ENCODE measurements at regions of chr5 and their contacts with region 1.

Region 1: DNA sequence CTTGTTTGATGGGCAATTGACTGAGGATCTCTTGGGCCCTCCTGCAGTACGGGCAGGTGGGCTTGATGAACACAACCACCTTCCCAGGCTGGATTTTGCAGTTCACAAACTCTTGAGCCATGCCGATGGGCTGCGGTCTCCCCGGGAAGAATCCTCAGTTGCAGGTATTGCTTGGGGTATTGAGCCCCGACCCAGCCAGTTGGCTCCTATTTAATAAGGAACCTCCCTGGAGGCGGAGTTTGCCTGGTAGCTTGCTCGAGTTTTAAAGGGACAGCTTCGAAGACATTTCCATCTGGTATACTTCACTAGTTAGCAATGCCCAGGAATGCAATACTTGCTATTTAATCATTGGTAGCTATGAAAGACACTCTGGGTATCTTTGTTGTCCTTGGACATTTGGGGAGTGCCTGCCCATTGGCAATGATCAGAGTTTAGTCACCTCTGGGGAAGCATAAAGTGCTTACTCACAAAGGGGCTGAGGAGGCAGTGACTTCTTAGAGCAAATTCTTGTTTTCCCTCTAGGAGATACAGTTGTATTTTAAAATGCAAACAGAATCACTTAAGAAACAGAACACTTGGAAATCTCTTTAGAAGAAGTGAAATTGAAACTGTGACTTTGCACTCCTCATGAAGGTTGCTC is at the start of gene GLRX:
- DNase-seq: peak; percentile 93
- H3K4me3 Mint-ChIP-seq: peak within 1 kb of the TSS; percentile 95
- H3K27ac Mint-ChIP-seq: peak within 1 kb of the TSS; percentile 92
- H3K4me1 Mint-ChIP-seq: peaks cover 42% of the 10 kb centered on the region
- H3K27me3 Mint-ChIP-seq: no peaks in the 10 kb centered on the region
- CTCF ChIP-seq: no peak
- total RNA-seq, gene GLRX: 41.4 and 59.2 TPM in 2 replicates

Region 2: GRCh38 chr5:95773335-95774059 is 49.2 kb before region 1 on chr5:
- CTCF ChIA-PET with region 1: interaction called, 5 read pairs
- POLR2A ChIA-PET with region 1: interaction called, 21 read pairs
- intact Hi-C with region 1: no loop called
- DNase-seq: peak; percentile 83
- H3K4me3 Mint-ChIP-seq: no peak overlapping the region
- H3K27ac Mint-ChIP-seq: no peak overlapping the region
- H3K4me1 Mint-ChIP-seq: peaks cover 13% of the 10 kb centered on the region
- H3K27me3 Mint-ChIP-seq: no peaks in the 10 kb centered on the region
- CTCF ChIP-seq: no peak

Region 3: GRCh38 chr5:95835682-95836385 is 13.2 kb after region 1 on chr5:
- CTCF ChIA-PET with region 1: interaction called, 15 read pairs
- POLR2A ChIA-PET with region 1: interaction called, 55 read pairs
- intact Hi-C with region 1: no loop called
- DNase-seq: no peak
- H3K4me3 Mint-ChIP-seq: no peak overlapping the region
- H3K27ac Mint-ChIP-seq: no peak overlapping the region
- H3K4me1 Mint-ChIP-seq: peaks cover 15% of the 10 kb centered on the region
- H3K27me3 Mint-ChIP-seq: no peaks in the 10 kb centered on the region
- CTCF ChIP-seq: no peak

Region 4: DNA sequence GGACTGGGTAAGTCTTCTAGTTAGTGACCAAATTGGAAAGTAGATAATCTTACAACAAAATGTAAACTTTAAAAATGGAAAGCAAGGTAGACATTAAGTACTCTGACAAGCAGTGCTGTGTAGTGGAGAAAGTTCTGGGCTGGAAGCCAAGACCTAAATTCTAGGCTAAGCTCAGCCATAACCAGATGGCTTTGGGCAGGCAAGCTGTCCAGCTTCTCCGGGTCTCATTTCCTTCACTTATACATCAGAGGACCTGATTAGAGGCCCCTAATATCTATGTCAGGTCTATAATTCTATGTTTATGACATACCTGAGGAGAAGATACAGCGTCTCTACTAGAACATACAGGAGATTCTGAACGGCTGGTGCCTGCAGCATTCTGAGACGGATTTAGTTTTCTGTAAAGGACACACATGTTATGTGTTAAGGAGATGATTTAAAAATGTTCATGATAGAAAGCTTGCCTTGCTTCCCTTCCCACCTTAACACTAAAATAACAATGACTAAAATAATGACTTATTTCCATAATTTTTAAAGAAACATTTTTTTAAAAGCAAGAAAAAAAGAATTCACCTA is 77.8 kb after region 1 on chr5:
- CTCF ChIA-PET with region 1: no interaction called
- POLR2A ChIA-PET with region 1: no interaction called
- intact Hi-C with region 1: no loop called
- DNase-seq: peak; percentile 40
- H3K4me3 Mint-ChIP-seq: no peak overlapping the region
- H3K27ac Mint-ChIP-seq: peak overlapping the region; percentile 59
- H3K4me1 Mint-ChIP-seq: peaks cover 26% of the 10 kb centered on the region
- H3K27me3 Mint-ChIP-seq: no peaks in the 10 kb centered on the region
- CTCF ChIP-seq: no peak

Measured in MCF 10A (cell line).